GM18951 (cell line): ENCODE measurements at regions of chr11 and their contacts with region 1.

Region 1: GRCh38 chr11:13189561-13190426 is 87.8 kb upstream of the BMAL1 start:
- POLR2A ChIP-seq: no peak

Region 2: GRCh38 chr11:13343931-13344717 is 154.3 kb after region 1 on chr11:
- in situ Hi-C with region 1: loop called (anchors 10 kb)
- POLR2A ChIP-seq: no peak